GM12878 (cell line): ENCODE measurements at regions of chr1 and their contacts with region 1.

Region 1: DNA sequence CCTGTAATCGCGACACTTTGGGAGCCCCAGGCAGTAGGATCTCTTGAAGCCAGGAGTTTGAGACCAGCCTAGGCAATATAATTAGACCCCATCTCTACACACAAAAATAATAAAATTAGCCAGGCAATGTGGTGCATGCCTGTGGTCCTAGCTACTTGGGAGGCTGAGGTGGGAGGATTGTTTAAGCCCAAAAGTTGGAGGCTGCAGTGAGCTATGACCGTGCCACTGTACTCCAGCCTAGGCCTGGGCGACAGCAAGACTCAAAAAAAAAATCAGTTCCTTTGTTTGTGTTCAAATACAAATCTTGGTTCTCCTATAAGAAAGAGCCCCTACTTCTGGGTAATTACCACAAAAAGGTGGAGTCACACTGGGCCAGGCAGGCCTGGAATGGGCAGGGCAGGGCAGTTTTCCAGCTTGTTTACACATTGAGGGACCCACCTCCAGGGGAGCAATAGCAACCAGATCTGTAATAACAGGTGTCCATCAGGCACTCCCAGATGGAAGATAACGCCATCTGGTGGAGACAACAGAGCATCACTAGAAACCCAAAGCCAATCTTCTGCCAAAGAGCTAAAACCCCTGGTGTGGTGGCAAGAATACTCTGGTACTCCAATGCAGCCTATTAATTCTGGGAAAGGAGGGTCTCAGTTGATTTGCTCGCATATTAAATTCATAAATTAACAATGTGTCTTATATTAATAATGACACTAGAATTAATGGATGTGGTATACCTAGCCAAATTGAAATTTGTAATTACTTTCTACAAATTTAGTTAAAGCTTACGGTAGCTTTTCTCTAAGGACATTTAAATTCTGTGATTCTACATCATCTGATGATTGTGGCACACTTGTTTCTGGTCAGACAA is 13.2 kb downstream of the PPP1R15B start:
- DNase-seq: no peak
- ATAC-seq: peak; percentile 94
- H3K4me3 ChIP-seq: no peak overlapping the region
- H3K27ac ChIP-seq: no peak overlapping the region
- H3K4me1 ChIP-seq: no peaks in the 10 kb centered on the region
- H3K27me3 ChIP-seq: no peaks in the 10 kb centered on the region
- CTCF ChIP-seq: peak; percentile 83 to 91 (median 86)
- EP300 ChIP-seq: no peak
- POLR2A ChIP-seq: no peak
- RAD21 ChIP-seq: peak; percentile 62

Region 2: GRCh38 chr1:204207136-204207616 is 191.3 kb before region 1 on chr1:
- CTCF ChIA-PET with region 1: interaction called, 20 read pairs
- POLR2A ChIA-PET with region 1: interaction called, 4 read pairs
- RAD21 ChIA-PET with region 1: interaction called, 3 read pairs
- SMC1A ChIA-PET with region 1: interaction called, 6 read pairs
- in situ Hi-C with region 1: no loop called
- intact Hi-C with region 1: no loop called
- DNase-seq: no peak
- ATAC-seq: peak; percentile 98
- H3K4me3 ChIP-seq: no peak overlapping the region
- H3K27ac ChIP-seq: no peak overlapping the region
- H3K4me1 ChIP-seq: no peaks in the 10 kb centered on the region
- H3K27me3 ChIP-seq: peaks cover 0 to 8% of the 10 kb centered on the region in 2 experiments; a peak in 2 of 4 replicates
- CTCF ChIP-seq: peak; percentile 79 to 94 (median 90)
- EP300 ChIP-seq: no peak
- POLR2A ChIP-seq: no peak
- RAD21 ChIP-seq: peak; percentile 52

Region 3: GRCh38 chr1:204331847-204332487 is 66.5 kb before region 1 on chr1:
- CTCF ChIA-PET with region 1: interaction called, 11 read pairs
- POLR2A ChIA-PET with region 1: no interaction called
- RAD21 ChIA-PET with region 1: no interaction called
- SMC1A ChIA-PET with region 1: interaction called, 5 read pairs
- in situ Hi-C with region 1: no loop called
- intact Hi-C with region 1: no loop called
- DNase-seq: no peak
- ATAC-seq: no peak
- H3K4me3 ChIP-seq: no peak overlapping the region
- H3K27ac ChIP-seq: no peak overlapping the region
- H3K4me1 ChIP-seq: no peaks in the 10 kb centered on the region
- H3K27me3 ChIP-seq: peaks cover 0 to 4% of the 10 kb centered on the region in 2 experiments; a peak in 2 of 4 replicates
- CTCF ChIP-seq: no peak
- EP300 ChIP-seq: no peak
- POLR2A ChIP-seq: no peak
- RAD21 ChIP-seq: no peak

Region 4: GRCh38 chr1:204377795-204378608 is 20.4 kb before region 1 on chr1:
- CTCF ChIA-PET with region 1: interaction called, 297 read pairs
- POLR2A ChIA-PET with region 1: interaction called, 8 read pairs
- RAD21 ChIA-PET with region 1: interaction called, 133 read pairs
- SMC1A ChIA-PET with region 1: interaction called, 109 read pairs
- in situ Hi-C with region 1: no loop called
- intact Hi-C with region 1: no loop called
- DNase-seq: no peak
- ATAC-seq: peak; percentile 89
- H3K4me3 ChIP-seq: peak overlapping the region; percentile 57; the same call in 1 of the 2 replicates
- H3K27ac ChIP-seq: no peak overlapping the region
- H3K4me1 ChIP-seq: peaks cover 6% of the 10 kb centered on the region
- H3K27me3 ChIP-seq: peaks cover 4 to 5% of the 10 kb centered on the region in 2 experiments; a peak in 3 of 4 replicates
- CTCF ChIP-seq: no peak
- EP300 ChIP-seq: peak in 1 of 2 experiments; percentile 73; a peak in 2 of 4 replicates
- POLR2A ChIP-seq: no peak
- RAD21 ChIP-seq: no peak

Region 5: DNA sequence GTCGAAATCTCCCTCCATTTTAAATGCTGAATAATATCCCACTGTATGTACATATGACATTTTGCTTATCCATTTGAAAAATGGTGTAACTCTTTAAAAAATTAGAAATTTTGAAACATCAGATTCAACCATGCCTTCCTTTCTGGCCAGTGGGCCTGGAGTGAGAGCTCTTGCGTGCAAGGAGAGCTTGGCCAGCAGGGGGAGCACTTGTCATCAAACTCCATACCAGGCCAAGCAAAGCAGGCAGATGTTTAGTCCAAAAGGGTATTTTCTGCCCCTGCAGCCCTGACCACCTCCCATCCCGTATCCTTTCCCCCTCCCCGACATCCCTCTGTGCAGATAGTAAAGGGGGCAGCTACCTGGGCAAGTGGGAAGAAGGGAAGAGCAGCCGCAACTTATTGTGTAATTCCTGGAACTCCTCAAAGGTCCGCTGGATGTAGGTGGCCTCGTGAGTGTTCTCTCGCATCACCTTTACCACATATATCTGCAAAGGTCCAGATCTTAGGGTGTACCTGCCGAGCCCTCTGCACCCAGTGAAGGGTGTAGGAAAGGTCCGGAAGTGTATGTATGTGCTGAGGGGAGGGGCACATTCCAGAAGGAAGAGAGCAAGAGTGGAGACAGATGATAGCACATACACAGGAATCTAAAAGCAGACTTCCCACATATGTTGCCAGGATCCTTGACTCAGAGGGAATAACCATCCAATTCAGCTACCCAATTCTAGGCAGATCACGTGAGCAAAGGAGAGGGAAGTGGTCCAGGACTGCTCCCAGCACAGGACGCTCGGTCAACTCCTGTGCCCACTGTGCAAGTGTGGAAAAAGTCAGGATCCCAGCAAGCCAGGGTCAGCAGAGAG is 33.1 kb after region 1 on chr1:
- CTCF ChIA-PET with region 1: interaction called, 21 read pairs
- POLR2A ChIA-PET with region 1: no interaction called
- RAD21 ChIA-PET with region 1: no interaction called
- SMC1A ChIA-PET with region 1: interaction called, 6 read pairs
- in situ Hi-C with region 1: no loop called
- intact Hi-C with region 1: no loop called
- DNase-seq: no peak
- ATAC-seq: peak; percentile 99
- H3K4me3 ChIP-seq: no peak overlapping the region
- H3K27ac ChIP-seq: no peak overlapping the region
- H3K4me1 ChIP-seq: no peaks in the 10 kb centered on the region
- H3K27me3 ChIP-seq: no peaks in the 10 kb centered on the region
- CTCF ChIP-seq: peak; percentile 86 to 95 (median 94)
- EP300 ChIP-seq: no peak
- POLR2A ChIP-seq: no peak
- RAD21 ChIP-seq: peak; percentile 60

Region 6: DNA sequence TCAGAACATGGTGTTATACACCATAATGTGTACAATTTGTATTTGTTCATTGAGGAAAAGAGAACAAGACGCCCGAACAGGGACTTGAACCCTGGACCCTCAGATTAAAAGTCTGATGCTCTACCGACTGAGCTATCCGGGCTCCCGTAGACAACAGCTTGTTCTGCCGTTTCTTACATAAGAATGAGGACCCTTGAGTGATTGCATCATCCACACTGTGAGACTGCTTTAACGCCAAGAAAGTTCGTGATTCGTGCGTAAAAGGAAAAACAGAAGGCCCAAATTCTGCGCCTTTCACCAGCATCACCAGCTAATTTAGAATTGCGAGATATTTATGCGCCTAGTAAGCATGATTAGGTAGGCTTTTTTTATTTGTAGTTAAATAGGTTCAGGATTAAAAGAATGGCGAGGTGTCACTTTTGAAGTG is 108.5 kb after region 1 on chr1:
- CTCF ChIA-PET with region 1: interaction called, 55 read pairs
- POLR2A ChIA-PET with region 1: no interaction called
- RAD21 ChIA-PET with region 1: interaction called, 13 read pairs
- SMC1A ChIA-PET with region 1: interaction called, 14 read pairs
- in situ Hi-C with region 1: no loop called
- intact Hi-C with region 1: no loop called
- DNase-seq: peak; percentile 97
- ATAC-seq: peak; percentile 83
- H3K4me3 ChIP-seq: peak overlapping the region; percentile 77
- H3K27ac ChIP-seq: peak overlapping the region; percentile 59
- H3K4me1 ChIP-seq: peaks cover 4% of the 10 kb centered on the region
- H3K27me3 ChIP-seq: no peaks in the 10 kb centered on the region
- CTCF ChIP-seq: no peak
- EP300 ChIP-seq: peak in 1 of 2 experiments; percentile 29; a peak in 1 of 4 replicates
- POLR2A ChIP-seq: peak; percentile 42; the same call in 1 of the 2 replicates
- RAD21 ChIP-seq: no peak